PC-9 (cell line): ENCODE measurements at regions of chr3 and their contacts with region 1.

Region 1: GRCh38 chr3:138329127-138329983 is at the start of gene NME9:
- DNase-seq: peak; percentile 58 to 83
- H3K4me3 ChIP-seq: peak within 1 kb of the TSS; percentile 78
- H3K27ac ChIP-seq: no peak within 1 kb of the TSS
- H3K4me1 ChIP-seq: peaks cover 7% of the 10 kb centered on the region
- H3K27me3 ChIP-seq: no peaks in the 10 kb centered on the region; the same call in 1 of the 2 replicates
- CTCF ChIP-seq: peak; percentile 54; the same call in 1 of the 2 replicates
- total RNA-seq, gene NME9: 1.3 TPM in 1 of 2 replicates, not detected in the other

Region 2: GRCh38 chr3:137724240-137724639 is 605.1 kb before region 1 on chr3:
- CTCF ChIA-PET with region 1: no interaction called
- POLR2A ChIA-PET with region 1: no interaction called
- intact Hi-C with region 1: no loop called
- DNase-seq: no peak
- H3K4me3 ChIP-seq: no peak overlapping the region
- H3K27ac ChIP-seq: no peak overlapping the region
- H3K4me1 ChIP-seq: no peaks in the 10 kb centered on the region
- H3K27me3 ChIP-seq: no peaks in the 10 kb centered on the region
- CTCF ChIP-seq: no peak

Region 3: GRCh38 chr3:138068579-138069174 is 260.7 kb before region 1 on chr3:
- CTCF ChIA-PET with region 1: no interaction called
- POLR2A ChIA-PET with region 1: no interaction called
- intact Hi-C with region 1: loop called (anchors 5 kb)
- DNase-seq: peak in 1 of 2 experiments; percentile 72
- H3K4me3 ChIP-seq: no peak overlapping the region
- H3K27ac ChIP-seq: no peak overlapping the region
- H3K4me1 ChIP-seq: no peaks in the 10 kb centered on the region
- H3K27me3 ChIP-seq: no peaks in the 10 kb centered on the region
- CTCF ChIP-seq: peak; percentile 97

Region 4: GRCh38 chr3:138300647-138301046 is 28.7 kb before region 1 on chr3:
- CTCF ChIA-PET with region 1: no interaction called
- POLR2A ChIA-PET with region 1: interaction called, 12 read pairs
- intact Hi-C with region 1: no loop called
- DNase-seq: no peak
- H3K4me3 ChIP-seq: no peak overlapping the region
- H3K27ac ChIP-seq: no peak overlapping the region
- H3K4me1 ChIP-seq: no peaks in the 10 kb centered on the region
- H3K27me3 ChIP-seq: no peaks in the 10 kb centered on the region
- CTCF ChIP-seq: no peak

Region 5: DNA sequence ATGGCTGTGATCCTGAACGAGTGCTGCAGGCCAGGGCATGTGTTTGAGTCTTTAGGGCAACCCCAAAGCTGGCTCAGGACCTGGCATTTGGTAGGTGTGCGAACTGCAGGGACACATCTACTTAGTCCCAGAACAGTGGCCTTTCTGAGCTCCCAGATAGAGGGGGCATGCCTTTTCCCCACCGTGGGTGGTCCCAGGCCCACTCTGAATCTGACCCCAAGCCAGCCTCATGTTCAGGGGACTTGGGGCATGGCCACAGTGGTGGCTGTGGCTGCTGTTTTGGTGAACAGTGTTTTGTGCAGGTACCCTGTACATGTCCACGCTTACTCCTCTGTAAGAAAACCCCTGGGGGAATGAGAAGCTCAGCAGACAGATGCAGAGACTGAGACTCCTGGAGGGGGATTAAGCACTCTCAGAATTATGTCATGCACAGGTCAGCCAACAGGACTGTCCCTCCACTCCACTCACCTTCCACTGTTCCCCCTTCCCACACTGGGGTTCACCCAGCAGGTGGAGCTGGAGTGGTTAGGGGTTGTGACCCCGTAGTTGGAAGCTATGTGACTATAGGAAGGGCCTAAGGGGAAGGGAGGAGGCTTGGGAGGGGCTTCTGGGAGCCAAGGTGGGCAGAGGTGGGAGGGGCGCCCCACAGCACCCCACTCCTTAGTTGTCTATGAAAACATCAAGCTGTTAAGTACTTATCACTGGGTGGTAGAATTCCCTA is 121.5 kb after region 1 on chr3:
- CTCF ChIA-PET with region 1: interaction called, 10 read pairs
- POLR2A ChIA-PET with region 1: no interaction called
- intact Hi-C with region 1: no loop called
- DNase-seq: no peak
- H3K4me3 ChIP-seq: no peak overlapping the region
- H3K27ac ChIP-seq: no peak overlapping the region
- H3K4me1 ChIP-seq: no peaks in the 10 kb centered on the region
- H3K27me3 ChIP-seq: no peaks in the 10 kb centered on the region
- CTCF ChIP-seq: no peak

Region 6: GRCh38 chr3:138923531-138923994 is 594.2 kb after region 1 on chr3:
- CTCF ChIA-PET with region 1: no interaction called
- POLR2A ChIA-PET with region 1: interaction called, 3 read pairs
- intact Hi-C with region 1: loop called (anchors 1 kb)
- DNase-seq: peak; percentile 67 to 85
- H3K4me3 ChIP-seq: no peak overlapping the region
- H3K27ac ChIP-seq: no peak overlapping the region
- H3K4me1 ChIP-seq: peaks cover 30% of the 10 kb centered on the region
- H3K27me3 ChIP-seq: no peaks in the 10 kb centered on the region
- CTCF ChIP-seq: peak; percentile 92

Region 7: DNA sequence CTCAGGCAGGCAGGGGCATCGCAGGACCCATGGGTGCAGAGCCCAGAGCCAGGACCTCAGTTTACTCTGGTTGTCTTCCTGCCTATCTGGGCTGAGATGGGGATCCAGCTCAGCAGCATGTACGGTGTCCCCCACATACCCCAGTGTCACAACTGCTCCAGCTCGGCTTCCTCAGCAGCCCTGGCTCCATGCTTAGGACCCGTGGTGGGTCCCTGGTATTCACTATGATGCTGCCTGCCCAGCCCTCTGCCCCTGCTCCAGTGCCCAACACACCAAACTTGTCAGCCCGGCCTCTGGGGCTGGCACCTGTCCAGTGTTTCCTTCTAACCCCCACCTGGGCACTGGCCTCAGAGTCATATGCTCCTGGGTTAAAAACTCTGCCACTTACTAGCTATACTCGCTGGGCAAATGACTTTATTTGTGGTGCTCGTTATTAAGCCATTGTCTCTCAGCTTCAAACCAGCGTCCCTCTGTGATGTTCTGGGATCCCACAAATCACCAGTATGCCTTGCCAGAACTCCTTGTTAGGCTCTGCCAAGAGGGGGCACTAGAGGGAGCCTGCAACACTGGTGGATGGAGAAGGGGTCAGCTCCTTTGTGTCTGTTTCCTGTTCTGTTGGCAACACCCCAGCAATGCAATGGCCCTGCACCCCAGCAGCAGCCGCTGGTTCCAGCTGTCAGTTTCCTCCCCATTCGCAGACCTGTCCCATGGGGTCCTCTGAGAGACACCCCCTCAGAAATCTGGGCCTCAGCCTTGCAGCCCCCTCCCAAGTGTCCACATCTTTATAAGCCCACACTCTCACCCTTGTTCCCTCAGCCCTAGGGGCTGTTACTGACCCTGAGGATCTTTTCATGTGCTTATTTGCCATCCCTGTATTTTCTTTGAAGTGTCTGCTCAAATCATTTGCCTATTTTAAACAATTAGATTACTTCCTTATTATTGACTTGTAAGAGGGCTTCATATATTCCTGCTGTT is 990.4 kb after region 1 on chr3:
- CTCF ChIA-PET with region 1: no interaction called
- POLR2A ChIA-PET with region 1: no interaction called
- intact Hi-C with region 1: loop called (anchors 10 kb)
- DNase-seq: no peak
- H3K4me3 ChIP-seq: no peak overlapping the region
- H3K27ac ChIP-seq: no peak overlapping the region
- H3K4me1 ChIP-seq: peaks cover 32% of the 10 kb centered on the region
- H3K27me3 ChIP-seq: no peaks in the 10 kb centered on the region
- CTCF ChIP-seq: peak; percentile 40; the same call in 1 of the 2 replicates